ENCODE measurements at regions of chr22 and their contacts with region 1.

Region 1: DNA sequence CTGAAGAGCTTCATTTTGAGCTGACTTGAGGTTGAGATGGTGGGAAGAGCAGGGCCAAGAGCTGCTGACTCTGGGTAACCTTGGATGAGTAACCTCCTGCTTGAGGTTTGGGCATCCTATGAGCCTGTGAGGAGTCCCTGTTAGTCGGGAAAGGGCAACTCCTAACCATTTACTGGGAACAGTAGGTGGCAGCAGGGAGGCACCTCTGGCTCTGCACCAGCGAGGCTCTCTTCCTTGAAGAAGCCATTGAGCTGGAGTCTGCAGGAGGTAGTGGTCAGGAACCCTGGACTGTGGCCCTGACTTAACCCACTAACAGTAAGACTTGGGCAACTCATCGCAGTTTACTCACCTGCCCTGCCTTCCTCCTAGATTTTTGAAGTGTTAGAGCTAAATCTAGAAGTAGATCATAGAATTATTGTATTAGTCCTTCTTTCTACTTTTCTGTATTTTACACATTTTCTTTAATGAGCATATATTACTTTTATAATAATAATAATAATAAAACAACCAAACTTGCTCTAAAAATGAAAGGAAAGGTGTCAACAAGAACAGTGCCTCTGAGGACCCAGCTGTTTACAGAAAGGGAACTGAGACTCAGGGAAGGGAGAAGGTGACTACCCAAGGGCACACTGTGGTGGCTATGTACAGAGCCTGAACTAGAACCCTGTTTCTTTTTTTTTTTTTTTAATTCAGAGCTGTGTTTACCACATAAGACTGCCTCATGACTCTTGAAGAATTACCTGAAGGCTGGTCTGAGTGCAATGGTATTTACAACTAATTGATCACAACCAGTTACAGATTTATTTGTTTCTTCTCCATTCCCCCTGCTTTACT is 47.5 kb downstream of the MEI1 start:
- DNase-seq: peak; percentile 72
- H3K4me3 Mint-ChIP-seq: no peak overlapping the region
- H3K27ac Mint-ChIP-seq: no peak overlapping the region
- H3K4me1 Mint-ChIP-seq: peaks cover 6% of the 10 kb centered on the region
- H3K27me3 Mint-ChIP-seq: peaks cover 11% of the 10 kb centered on the region

Region 2: GRCh38 chr22:41589391-41590241 is 157.2 kb before region 1 on chr22 and contains the start of gene PMM1:
- CTCF ChIA-PET with region 1: no interaction called
- POLR2A ChIA-PET with region 1: no interaction called
- intact Hi-C with region 1: no loop called
- DNase-seq: peak; percentile 100
- H3K4me3 Mint-ChIP-seq: peak within 1 kb of the TSS; percentile 94
- H3K27ac Mint-ChIP-seq: peak within 1 kb of the TSS; percentile 81
- H3K4me1 Mint-ChIP-seq: peaks cover 12% of the 10 kb centered on the region
- H3K27me3 Mint-ChIP-seq: no peaks in the 10 kb centered on the region
- total RNA-seq, gene PMM1: 45.1 to 46.4 TPM

Region 3: DNA sequence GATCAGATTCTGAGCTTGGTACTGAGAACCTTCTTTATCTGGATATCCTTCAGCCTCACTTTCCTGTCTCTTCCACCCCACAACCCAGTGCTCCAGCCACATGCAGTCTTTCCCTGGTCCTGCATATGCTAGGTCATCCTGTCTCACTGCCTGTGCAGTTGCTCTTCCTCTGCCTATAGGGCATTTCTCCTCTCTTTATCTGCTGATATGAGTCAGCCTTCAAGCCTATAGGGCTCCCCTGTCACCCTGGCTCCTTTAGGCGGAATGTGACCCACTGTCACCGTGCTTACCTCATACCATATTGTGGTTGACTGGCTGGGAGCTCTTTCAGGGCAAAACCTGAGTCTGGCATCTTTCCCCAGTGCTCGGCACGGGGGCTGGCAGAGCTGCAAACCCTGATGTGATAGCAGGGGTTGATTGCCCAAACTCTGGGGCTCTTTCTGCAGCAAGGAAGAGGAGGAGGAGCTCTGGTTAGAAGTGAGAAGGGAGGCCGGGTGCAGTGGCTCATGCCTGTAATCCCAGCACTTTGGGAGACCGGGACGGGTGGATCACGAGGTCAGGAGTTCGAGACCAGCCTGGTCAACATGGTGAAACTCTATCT is 21.2 kb before region 1 on chr22:
- CTCF ChIA-PET with region 1: no interaction called
- POLR2A ChIA-PET with region 1: no interaction called
- intact Hi-C with region 1: no loop called
- DNase-seq: peak; percentile 11
- H3K4me3 Mint-ChIP-seq: no peak overlapping the region
- H3K27ac Mint-ChIP-seq: no peak overlapping the region
- H3K4me1 Mint-ChIP-seq: no peaks in the 10 kb centered on the region
- H3K27me3 Mint-ChIP-seq: no peaks in the 10 kb centered on the region

Region 4: DNA sequence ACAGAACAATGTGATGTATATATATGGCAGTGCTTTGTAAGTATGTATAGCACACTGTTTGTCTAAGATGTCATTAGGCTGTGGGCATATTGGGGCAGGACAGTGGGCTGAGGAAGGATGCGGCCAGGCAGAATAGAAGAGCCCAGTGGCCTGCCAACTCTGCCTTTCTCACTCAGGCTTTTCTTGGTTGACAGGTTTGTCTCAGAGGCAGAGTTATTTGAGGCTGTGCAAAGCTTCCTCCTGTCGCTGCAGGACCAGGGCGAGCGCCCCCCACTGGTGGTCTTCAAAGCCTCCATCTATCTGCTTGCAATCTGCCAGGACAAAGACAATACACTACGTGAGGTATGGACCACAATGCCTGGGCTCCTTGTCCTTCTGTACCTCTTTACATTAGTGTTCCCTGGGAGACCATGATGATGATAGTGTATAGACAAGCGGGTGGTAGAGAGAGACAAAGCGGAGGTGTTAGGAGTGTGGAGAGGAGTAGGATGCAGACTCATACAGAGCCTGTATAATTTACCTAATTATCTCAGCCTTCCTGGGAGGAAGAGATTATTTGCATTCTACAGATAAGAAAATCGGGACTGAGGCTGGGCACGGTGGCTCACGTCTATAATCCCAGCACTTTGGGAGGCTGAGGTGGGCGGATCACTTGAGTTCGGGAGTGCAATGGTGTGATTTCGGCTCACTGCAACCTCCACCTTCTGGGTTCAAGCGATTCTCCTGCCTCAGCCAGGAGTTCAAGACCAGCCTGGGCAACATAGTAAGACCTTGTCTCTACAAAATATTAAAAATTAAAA is 16.4 kb after region 1 on chr22:
- CTCF ChIA-PET with region 1: interaction called, 22 read pairs
- POLR2A ChIA-PET with region 1: no interaction called
- intact Hi-C with region 1: no loop called
- DNase-seq: peak; percentile 62
- H3K4me3 Mint-ChIP-seq: no peak overlapping the region
- H3K27ac Mint-ChIP-seq: no peak overlapping the region
- H3K4me1 Mint-ChIP-seq: peaks cover 4% of the 10 kb centered on the region
- H3K27me3 Mint-ChIP-seq: no peaks in the 10 kb centered on the region

Region 5: DNA sequence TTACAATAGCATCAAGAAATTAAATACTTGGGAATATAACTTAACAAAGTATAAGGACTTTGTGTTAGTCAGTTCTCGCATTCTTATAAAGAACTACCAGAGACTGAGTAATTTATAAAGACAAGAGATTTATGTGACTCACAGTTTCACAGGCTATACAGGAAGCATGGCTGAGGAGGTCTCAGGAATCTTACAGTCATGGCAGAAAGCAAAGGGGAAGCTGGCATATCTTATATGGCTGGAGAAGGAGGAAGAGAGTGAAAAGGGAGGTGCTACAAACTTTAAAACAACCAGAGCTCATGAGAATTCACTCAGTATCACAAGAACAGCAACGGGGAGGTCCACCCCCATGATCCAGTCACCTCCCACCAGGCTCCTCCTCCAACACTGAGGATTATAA is 21.6 kb after region 1 on chr22:
- CTCF ChIA-PET with region 1: interaction called, 22 read pairs
- POLR2A ChIA-PET with region 1: no interaction called
- intact Hi-C with region 1: no loop called
- DNase-seq: no peak
- H3K4me3 Mint-ChIP-seq: no peak overlapping the region
- H3K27ac Mint-ChIP-seq: no peak overlapping the region
- H3K4me1 Mint-ChIP-seq: peaks cover 18% of the 10 kb centered on the region
- H3K27me3 Mint-ChIP-seq: no peaks in the 10 kb centered on the region

Region 6: DNA sequence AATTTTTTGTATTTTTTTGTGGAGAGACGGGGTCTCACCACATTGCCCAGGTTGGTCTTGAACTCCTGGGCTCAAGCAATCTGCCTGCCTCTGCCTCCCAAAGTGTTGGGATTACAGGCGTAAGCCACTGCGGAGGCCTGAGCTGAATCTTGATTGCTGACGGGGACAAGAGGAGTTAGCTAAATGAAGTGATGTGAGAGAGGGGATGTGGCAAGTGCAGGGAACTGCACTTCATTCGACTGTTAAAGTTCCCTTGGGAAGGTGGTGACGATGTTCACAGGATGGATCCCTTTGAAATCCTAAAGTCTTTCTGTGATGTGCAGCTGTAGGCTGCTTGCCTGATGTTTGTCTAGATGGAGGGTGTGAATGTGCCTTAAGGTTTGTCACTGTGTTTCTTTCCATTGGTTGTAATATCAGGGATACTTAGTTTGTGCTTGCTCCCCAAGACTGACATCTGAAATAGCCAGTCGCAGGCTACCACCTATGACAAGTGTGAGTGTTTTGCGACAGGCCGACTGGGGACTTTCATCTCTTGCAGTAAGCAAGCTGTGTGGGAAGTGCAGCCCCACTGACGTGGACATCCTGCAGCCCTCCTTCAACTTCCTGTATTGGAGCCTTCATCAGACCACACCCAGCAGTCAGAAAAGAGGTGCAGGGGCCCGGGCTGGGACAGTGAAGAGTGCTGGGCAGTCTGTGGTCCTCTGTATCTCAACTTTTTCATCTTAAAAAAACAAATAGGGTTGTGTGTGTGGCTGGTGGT is 34.1 kb after region 1 on chr22:
- CTCF ChIA-PET with region 1: interaction called, 36 read pairs
- POLR2A ChIA-PET with region 1: interaction called, 3 read pairs
- intact Hi-C with region 1: no loop called
- DNase-seq: peak; percentile 96
- H3K4me3 Mint-ChIP-seq: peak overlapping the region; percentile 84
- H3K27ac Mint-ChIP-seq: peak overlapping the region; percentile 92
- H3K4me1 Mint-ChIP-seq: peaks cover 43% of the 10 kb centered on the region
- H3K27me3 Mint-ChIP-seq: no peaks in the 10 kb centered on the region

Region 7: GRCh38 chr22:41800348-41801146 is 53.8 kb after region 1 on chr22 and contains the start of gene CCDC134:
- CTCF ChIA-PET with region 1: interaction called, 54 read pairs
- POLR2A ChIA-PET with region 1: interaction called, 5 read pairs
- intact Hi-C with region 1: loop called (anchors 1 kb)
- DNase-seq: peak; percentile 95
- H3K4me3 Mint-ChIP-seq: peak within 1 kb of the TSS; percentile 98
- H3K27ac Mint-ChIP-seq: peak within 1 kb of the TSS; percentile 95
- H3K4me1 Mint-ChIP-seq: peaks cover 35% of the 10 kb centered on the region
- H3K27me3 Mint-ChIP-seq: no peaks in the 10 kb centered on the region
- total RNA-seq, gene CCDC134: 16.1 to 17.6 TPM

Region 8: GRCh38 chr22:41808400-41808799 is 61.6 kb after region 1 on chr22:
- CTCF ChIA-PET with region 1: interaction called, 10 read pairs
- POLR2A ChIA-PET with region 1: no interaction called
- intact Hi-C with region 1: no loop called
- DNase-seq: no peak
- H3K4me3 Mint-ChIP-seq: no peak overlapping the region
- H3K27ac Mint-ChIP-seq: no peak overlapping the region
- H3K4me1 Mint-ChIP-seq: peaks cover 9% of the 10 kb centered on the region
- H3K27me3 Mint-ChIP-seq: no peaks in the 10 kb centered on the region

Region 9: DNA sequence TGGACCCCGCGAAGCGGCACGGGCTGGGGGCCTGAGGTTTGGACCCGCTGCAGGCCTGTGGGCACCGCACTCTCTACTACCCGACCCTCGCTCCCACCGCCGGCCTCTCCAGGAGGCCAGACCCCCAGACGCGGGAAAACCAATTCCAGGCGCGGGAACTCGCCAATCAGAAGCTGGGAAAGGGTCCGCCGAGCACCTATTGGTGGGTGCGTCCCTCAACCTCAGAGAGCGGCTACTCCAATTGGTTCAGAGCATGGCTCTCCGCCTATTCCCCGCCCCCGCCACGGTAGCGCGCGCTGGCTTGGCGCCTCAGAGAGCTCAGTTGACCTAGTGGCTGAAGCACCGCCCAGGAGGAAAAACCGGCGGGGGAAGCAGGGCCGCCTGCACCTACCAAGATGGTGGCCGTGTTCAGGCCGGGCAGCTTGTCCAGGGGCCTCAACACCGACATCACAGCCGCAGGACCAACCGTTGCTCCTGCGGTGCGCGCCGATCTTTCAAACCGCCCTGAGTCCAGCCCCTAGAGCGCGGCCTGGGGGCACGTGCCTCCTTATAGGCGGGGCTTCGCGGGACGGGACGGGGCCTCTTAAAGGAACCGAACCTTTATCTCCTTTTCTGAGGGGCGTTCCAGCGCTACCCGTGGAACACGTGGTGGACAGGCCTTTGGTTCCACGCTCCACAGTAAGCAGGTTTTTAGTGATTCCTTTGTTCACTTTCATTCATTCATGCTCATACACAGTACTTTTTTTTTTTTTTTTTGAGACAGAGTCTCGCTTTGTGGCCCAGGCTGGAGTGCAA is 200.0 kb after region 1 on chr22 and contains the start of gene CENPM:
- CTCF ChIA-PET with region 1: interaction called, 6 read pairs
- POLR2A ChIA-PET with region 1: interaction called, 4 read pairs
- intact Hi-C with region 1: loop called (anchors 2 kb)
- DNase-seq: peak; percentile 96
- H3K4me3 Mint-ChIP-seq: peak within 1 kb of the TSS; percentile 98
- H3K27ac Mint-ChIP-seq: peak within 1 kb of the TSS; percentile 87
- H3K4me1 Mint-ChIP-seq: peaks cover 52% of the 10 kb centered on the region
- H3K27me3 Mint-ChIP-seq: no peaks in the 10 kb centered on the region
- total RNA-seq, gene CENPM: 99.9 to 106 TPM